CD14-positive monocyte (primary cell): ENCODE measurements at regions of chr14 and their contacts with region 1.

Region 1: DNA sequence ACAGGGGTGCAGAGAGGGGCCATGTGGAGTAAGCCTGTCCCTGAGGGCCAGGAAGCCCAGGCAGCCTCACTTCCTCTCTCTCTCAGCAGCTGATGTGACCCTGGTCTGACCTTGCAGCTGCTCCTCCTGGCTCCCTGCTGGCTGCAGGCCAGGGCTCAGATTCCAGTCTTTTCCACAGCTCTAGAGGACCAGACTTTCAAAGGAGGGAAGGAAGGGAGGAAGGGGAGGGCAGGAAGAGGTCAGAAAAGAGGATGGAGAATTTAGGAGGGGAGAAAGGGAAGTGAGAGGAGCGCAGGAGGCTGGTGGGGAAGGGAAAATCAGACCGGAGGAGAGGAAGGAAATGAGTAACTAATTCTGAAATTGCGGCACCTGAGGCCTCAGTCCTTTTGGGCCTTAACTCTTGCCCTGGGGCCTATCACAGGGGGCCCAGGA is 40.9 kb upstream of the VASH1 start:
- DNase-seq: peak; percentile 40 to 90 (median 58)
- H3K4me3 ChIP-seq: peak overlapping the region in 1 of 3 experiments; percentile 29
- H3K4me3 Mint-ChIP-seq: peak overlapping the region; percentile 52 to 56
- H3K27ac ChIP-seq: peak overlapping the region; percentile 0 to 65
- H3K27ac Mint-ChIP-seq: peak overlapping the region; percentile 85 to 96 (median 93)
- H3K4me1 ChIP-seq: peaks cover 36% of the 10 kb centered on the region in 2 donors
- H3K4me1 Mint-ChIP-seq: peaks cover 68% of the 10 kb centered on the region
- H3K27me3 ChIP-seq: no peaks in the 10 kb centered on the region
- H3K27me3 Mint-ChIP-seq: no peaks in the 10 kb centered on the region
- CTCF ChIP-seq: no peak

Region 2: GRCh38 chr14:76761136-76761959 is 41.0 kb after region 1 on chr14 and contains the start of gene VASH1:
- intact Hi-C with region 1: loop called in 1 of 2 experiments (anchors 5 kb)
- DNase-seq: peak; percentile 66 to 73 (median 69)
- H3K4me3 ChIP-seq: peak within 1 kb of the TSS; percentile 55 to 81 (median 77)
- H3K4me3 Mint-ChIP-seq: peak within 1 kb of the TSS; percentile 88 to 93
- H3K27ac ChIP-seq: peak within 1 kb of the TSS in 1 of 2 donors; percentile 72
- H3K27ac Mint-ChIP-seq: peak within 1 kb of the TSS; percentile 62 to 87 (median 81)
- H3K4me1 ChIP-seq: peaks cover 20 to 32% of the 10 kb centered on the region in 2 donors
- H3K4me1 Mint-ChIP-seq: peaks cover 36% of the 10 kb centered on the region
- H3K27me3 ChIP-seq: peaks cover 0 to 12% of the 10 kb centered on the region in 2 donors
- H3K27me3 Mint-ChIP-seq: peaks cover 15 to 19% (median 15%) of the 10 kb centered on the region in 3 donors
- CTCF ChIP-seq: no peak
- polyA plus RNA-seq, gene VASH1: 2.5 to 10.5 (median 3.3) TPM

Region 3: DNA sequence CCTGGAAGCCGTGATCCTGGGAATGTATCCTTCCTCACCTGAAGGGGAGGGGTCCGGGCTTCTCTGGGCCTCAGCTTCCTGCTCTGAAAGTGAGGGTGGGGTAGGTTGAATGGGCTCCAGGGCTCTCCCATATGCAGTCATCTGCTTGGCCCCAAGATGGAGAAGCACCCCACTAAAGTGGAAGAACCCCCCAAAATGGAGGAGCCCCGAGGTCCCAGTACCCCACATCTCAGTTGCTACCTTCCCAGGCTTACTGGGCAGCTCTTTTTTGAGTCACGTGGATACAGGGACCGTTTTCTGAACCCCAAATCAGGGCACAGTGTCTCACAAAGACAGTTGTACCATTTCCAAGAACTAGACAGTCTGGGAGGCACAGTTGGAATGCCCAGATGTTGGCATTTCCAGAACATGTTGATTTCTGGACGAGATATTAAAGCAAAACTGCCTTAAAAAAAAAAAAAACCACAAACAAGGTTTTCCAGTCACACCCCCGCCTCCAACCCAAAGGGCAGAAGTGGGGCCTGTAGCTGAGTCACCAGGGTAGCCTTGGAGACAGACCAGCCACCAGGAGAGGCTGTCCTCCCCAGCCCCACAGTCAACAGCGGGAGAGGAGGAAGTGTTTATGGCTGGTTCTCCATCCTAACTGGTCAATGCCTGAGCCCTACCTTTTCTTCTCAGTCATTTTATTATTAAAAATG is 52.9 kb after region 1 on chr14:
- intact Hi-C with region 1: loop called in 1 of 2 experiments (anchors 5 kb)
- DNase-seq: peak; percentile 91 to 97 (median 93)
- H3K4me3 ChIP-seq: peak overlapping the region in 1 of 3 experiments; percentile 57
- H3K4me3 Mint-ChIP-seq: peak overlapping the region; percentile 50 to 78
- H3K27ac ChIP-seq: peak overlapping the region; percentile 73 to 95
- H3K27ac Mint-ChIP-seq: peak overlapping the region; percentile 94 to 97 (median 96)
- H3K4me1 ChIP-seq: peaks cover 62 to 77% of the 10 kb centered on the region in 2 donors
- H3K4me1 Mint-ChIP-seq: peaks cover 77% of the 10 kb centered on the region
- H3K27me3 ChIP-seq: no peaks in the 10 kb centered on the region
- H3K27me3 Mint-ChIP-seq: peaks cover 0 to 1% (median 0%) of the 10 kb centered on the region in 3 donors
- CTCF ChIP-seq: no peak

Region 4: GRCh38 chr14:77097700-77098528 is 377.5 kb after region 1 on chr14 and contains the start of gene CIPC:
- intact Hi-C with region 1: loop called in 1 of 2 experiments (anchors 10 kb)
- DNase-seq: peak; percentile 99 to 100 (median 99)
- H3K4me3 ChIP-seq: peak within 1 kb of the TSS; percentile 61 to 91 (median 64)
- H3K4me3 Mint-ChIP-seq: peak within 1 kb of the TSS; percentile 87 to 94
- H3K27ac ChIP-seq: peak within 1 kb of the TSS; percentile 90 to 96
- H3K27ac Mint-ChIP-seq: peak within 1 kb of the TSS; percentile 94 to 98 (median 97)
- H3K4me1 ChIP-seq: peaks cover 24 to 29% of the 10 kb centered on the region in 2 donors
- H3K4me1 Mint-ChIP-seq: peaks cover 28% of the 10 kb centered on the region
- H3K27me3 ChIP-seq: no peaks in the 10 kb centered on the region
- H3K27me3 Mint-ChIP-seq: peaks cover 0 to 2% (median 1%) of the 10 kb centered on the region in 3 donors
- CTCF ChIP-seq: no peak
- polyA plus RNA-seq, gene CIPC: 4.4 to 11.2 (median 7.0) TPM